CD4-positive, alpha-beta memory T cell (primary cell): ENCODE measurements at regions of chr17 and their contacts with region 1.

Region 1: DNA sequence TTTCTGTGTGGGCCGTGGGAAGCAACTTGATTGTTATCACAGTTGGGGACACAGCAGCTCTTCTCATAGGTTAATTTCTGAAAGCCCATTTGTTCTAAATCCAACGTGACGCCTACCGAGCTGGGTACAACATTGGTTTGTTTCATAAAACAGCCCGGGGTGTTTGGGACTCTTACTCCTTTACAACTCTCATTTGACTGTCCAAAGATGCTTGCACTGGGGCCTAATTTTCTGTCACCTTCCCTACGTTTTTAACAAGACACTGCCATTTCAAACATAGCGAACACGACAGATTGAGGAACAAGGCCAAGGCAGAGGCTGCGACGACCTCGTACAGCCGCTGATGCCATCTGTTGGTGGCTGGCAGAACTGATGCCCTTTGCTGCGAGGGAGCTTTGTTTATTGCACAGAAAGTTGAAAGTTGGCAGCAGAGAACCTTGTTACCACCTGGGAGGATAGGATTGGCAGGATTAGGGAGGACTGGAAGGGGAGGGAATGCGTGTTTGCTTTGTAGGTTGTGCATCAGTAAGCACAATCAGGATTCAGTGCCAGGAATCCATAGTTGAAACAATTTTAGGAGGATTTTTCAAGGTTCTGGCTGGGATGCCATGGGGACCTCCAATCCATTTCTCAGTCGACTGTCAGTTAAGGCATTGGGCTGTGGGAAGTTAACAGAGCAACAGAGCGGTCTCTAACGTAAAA is 98.3 kb downstream of the PITPNC1 start:
- DNase-seq: peak; percentile 84 to 87 (median 86)
- H3K4me3 ChIP-seq: peak overlapping the region in 1 of 2 donors; percentile 36
- H3K4me3 Mint-ChIP-seq: peak overlapping the region; percentile 76 to 86 (median 82)
- H3K27ac ChIP-seq: peak overlapping the region; percentile 64
- H3K27ac Mint-ChIP-seq: peak overlapping the region; percentile 94 to 97 (median 96)
- H3K4me1 ChIP-seq: peaks cover 61% of the 10 kb centered on the region
- H3K4me1 Mint-ChIP-seq: peaks cover 53 to 76% (median 63%) of the 10 kb centered on the region in 4 donors
- H3K27me3 ChIP-seq: no peaks in the 10 kb centered on the region
- H3K27me3 Mint-ChIP-seq: no peaks in the 10 kb centered on the region

Region 2: GRCh38 chr17:67390646-67391384 is 84.6 kb before region 1 on chr17:
- CTCF ChIA-PET with region 1: interaction called, 605 read pairs
- POLR2A ChIA-PET with region 1: interaction called, 43 read pairs
- intact Hi-C with region 1: loop called (anchors 1 kb)
- DNase-seq: peak; percentile 47 to 82 (median 61)
- H3K4me3 ChIP-seq: peak overlapping the region in 1 of 2 donors; percentile 6
- H3K4me3 Mint-ChIP-seq: peak overlapping the region; percentile 69 to 96 (median 85)
- H3K27ac ChIP-seq: peak overlapping the region; percentile 53
- H3K27ac Mint-ChIP-seq: peak overlapping the region; percentile 92 to 97 (median 96)
- H3K4me1 ChIP-seq: peaks cover 76% of the 10 kb centered on the region
- H3K4me1 Mint-ChIP-seq: peaks cover 46 to 82% (median 64%) of the 10 kb centered on the region in 4 donors
- H3K27me3 ChIP-seq: no peaks in the 10 kb centered on the region
- H3K27me3 Mint-ChIP-seq: no peaks in the 10 kb centered on the region

Region 3: DNA sequence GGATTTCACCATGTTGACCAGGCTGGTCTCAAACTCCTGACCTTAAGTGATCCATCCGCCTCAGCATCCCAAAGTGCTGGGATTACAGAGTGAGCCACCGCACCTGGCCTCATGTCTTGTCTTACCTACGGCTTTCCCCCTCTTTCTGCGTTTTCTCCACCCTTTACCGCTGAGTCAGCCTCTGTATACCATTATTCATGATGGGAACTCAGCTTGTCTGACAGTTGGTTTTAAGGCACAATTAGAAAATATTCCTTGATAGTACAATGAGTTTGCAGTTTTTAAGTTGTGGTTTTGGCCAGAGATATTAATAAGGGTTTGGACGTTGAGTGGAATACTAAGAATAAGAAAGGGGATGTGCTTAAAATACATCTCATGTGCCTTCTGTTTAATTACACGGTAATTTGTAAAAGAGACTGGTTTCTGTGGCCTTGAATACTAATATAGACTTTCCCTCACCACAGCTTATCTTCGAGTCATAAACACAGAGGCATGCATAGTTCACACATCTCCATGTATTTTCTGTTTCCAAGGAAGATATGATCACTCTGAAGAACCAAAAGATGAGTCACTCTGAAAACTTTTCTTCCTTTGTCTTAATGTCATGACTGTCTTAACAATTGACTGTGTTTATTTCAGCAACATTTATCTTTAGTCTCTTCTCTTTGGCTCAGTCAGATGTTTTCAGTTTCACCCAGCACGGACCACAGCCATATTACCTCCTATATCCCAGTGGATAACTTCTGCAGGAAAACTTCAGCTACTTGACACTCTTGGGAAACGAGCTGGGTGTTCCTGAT is 43.9 kb before region 1 on chr17:
- CTCF ChIA-PET with region 1: interaction called, 198 read pairs
- POLR2A ChIA-PET with region 1: interaction called, 39 read pairs
- intact Hi-C with region 1: loop called (anchors 1 kb)
- DNase-seq: peak in 1 of 5 donors; percentile 19
- H3K4me3 ChIP-seq: no peak overlapping the region
- H3K4me3 Mint-ChIP-seq: peak overlapping the region in 6 of 8 donors; percentile 7 to 58 (median 42)
- H3K27ac ChIP-seq: no peak overlapping the region
- H3K27ac Mint-ChIP-seq: peak overlapping the region; percentile 56 to 99 (median 77)
- H3K4me1 ChIP-seq: peaks cover 64% of the 10 kb centered on the region
- H3K4me1 Mint-ChIP-seq: peaks cover 43 to 82% (median 57%) of the 10 kb centered on the region in 4 donors
- H3K27me3 ChIP-seq: no peaks in the 10 kb centered on the region
- H3K27me3 Mint-ChIP-seq: no peaks in the 10 kb centered on the region

Region 4: DNA sequence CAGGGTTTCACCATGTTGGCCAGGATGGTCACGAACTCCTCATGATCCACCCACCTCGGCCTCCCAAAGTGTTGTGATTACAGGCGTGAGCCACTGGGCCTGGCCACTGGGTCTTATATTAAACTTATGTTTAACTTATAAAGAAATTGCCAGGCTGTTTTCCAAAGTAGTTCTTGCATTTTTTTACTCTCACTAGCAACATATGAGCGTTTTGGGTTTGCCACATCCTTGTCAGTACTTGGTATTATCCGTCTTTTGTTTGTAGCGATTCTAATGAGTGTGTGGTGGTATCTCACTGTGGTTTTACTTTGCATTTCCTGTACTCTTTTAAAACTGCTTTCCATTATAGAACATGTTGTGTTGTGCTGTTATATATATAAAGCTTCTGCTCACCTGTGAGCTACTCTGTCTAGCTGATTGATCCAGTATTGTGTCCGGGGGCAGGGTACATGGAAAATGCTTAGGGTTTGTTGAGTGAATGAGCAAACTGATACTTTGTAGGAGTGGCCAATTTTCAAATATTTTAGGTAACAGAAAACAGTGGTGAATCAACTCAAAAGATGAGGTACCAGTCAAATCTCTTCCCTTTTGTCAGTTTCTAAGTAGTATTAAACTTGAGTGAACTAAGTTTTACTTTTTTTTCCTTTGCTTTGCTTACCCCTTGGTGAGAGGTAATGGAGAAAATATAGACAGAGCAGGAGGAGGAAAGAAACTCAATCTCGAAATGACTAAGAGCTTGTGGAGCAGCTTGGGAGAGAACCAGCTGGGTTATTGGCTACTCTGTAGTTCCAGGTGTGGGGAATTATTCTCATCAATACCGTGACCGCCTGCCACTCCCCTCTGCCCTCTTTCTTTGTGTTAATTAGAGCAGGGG is 22.5 kb before region 1 on chr17:
- CTCF ChIA-PET with region 1: interaction called, 80 read pairs
- POLR2A ChIA-PET with region 1: interaction called, 104 read pairs
- intact Hi-C with region 1: loop called (anchors 2 kb)
- DNase-seq: peak; percentile 63 to 82 (median 75)
- H3K4me3 ChIP-seq: peak overlapping the region in 1 of 2 donors; percentile 17
- H3K4me3 Mint-ChIP-seq: peak overlapping the region; percentile 71 to 86 (median 80)
- H3K27ac ChIP-seq: peak overlapping the region; percentile 34
- H3K27ac Mint-ChIP-seq: peak overlapping the region; percentile 89 to 96 (median 96)
- H3K4me1 ChIP-seq: peaks cover 86% of the 10 kb centered on the region
- H3K4me1 Mint-ChIP-seq: peaks cover 56 to 100% (median 79%) of the 10 kb centered on the region in 4 donors
- H3K27me3 ChIP-seq: no peaks in the 10 kb centered on the region
- H3K27me3 Mint-ChIP-seq: no peaks in the 10 kb centered on the region

Region 5: DNA sequence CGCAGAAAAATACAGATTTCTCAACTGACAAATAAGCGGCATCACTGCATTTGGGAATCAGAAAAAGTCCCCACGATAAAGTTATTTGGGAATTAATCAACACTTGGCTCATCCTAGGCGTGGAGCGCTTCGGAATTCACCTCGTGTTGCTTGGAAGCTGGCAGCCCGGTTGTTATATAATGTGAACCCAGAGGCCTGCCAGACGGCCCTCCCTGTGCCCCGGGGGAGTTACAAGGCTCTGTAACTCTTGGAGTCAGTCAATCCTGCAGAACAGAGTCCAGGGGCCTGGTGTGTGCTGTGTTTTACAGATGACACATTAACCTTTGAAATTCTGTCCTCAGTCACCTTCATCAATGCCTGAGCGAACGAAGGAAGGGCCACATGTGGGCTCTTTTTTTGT is 12.8 kb after region 1 on chr17:
- CTCF ChIA-PET with region 1: interaction called, 10 read pairs
- POLR2A ChIA-PET with region 1: interaction called, 7 read pairs
- intact Hi-C with region 1: no loop called
- DNase-seq: no peak
- H3K4me3 ChIP-seq: no peak overlapping the region
- H3K4me3 Mint-ChIP-seq: no peak overlapping the region
- H3K27ac ChIP-seq: no peak overlapping the region
- H3K27ac Mint-ChIP-seq: peak overlapping the region in 2 of 7 donors; percentile 25 to 46
- H3K4me1 ChIP-seq: peaks cover 43% of the 10 kb centered on the region
- H3K4me1 Mint-ChIP-seq: peaks cover 40 to 79% (median 64%) of the 10 kb centered on the region in 4 donors
- H3K27me3 ChIP-seq: no peaks in the 10 kb centered on the region
- H3K27me3 Mint-ChIP-seq: no peaks in the 10 kb centered on the region

Region 6: GRCh38 chr17:67520252-67520906 is 45.0 kb after region 1 on chr17:
- CTCF ChIA-PET with region 1: no interaction called
- POLR2A ChIA-PET with region 1: no interaction called
- intact Hi-C with region 1: no loop called
- DNase-seq: no peak
- H3K4me3 ChIP-seq: no peak overlapping the region
- H3K4me3 Mint-ChIP-seq: peak overlapping the region in 7 of 8 donors; percentile 10 to 76 (median 57)
- H3K27ac ChIP-seq: no peak overlapping the region
- H3K27ac Mint-ChIP-seq: peak overlapping the region; percentile 52 to 91 (median 86)
- H3K4me1 ChIP-seq: peaks cover 16% of the 10 kb centered on the region
- H3K4me1 Mint-ChIP-seq: peaks cover 44 to 70% (median 54%) of the 10 kb centered on the region in 4 donors
- H3K27me3 ChIP-seq: no peaks in the 10 kb centered on the region
- H3K27me3 Mint-ChIP-seq: no peaks in the 10 kb centered on the region

Region 7: DNA sequence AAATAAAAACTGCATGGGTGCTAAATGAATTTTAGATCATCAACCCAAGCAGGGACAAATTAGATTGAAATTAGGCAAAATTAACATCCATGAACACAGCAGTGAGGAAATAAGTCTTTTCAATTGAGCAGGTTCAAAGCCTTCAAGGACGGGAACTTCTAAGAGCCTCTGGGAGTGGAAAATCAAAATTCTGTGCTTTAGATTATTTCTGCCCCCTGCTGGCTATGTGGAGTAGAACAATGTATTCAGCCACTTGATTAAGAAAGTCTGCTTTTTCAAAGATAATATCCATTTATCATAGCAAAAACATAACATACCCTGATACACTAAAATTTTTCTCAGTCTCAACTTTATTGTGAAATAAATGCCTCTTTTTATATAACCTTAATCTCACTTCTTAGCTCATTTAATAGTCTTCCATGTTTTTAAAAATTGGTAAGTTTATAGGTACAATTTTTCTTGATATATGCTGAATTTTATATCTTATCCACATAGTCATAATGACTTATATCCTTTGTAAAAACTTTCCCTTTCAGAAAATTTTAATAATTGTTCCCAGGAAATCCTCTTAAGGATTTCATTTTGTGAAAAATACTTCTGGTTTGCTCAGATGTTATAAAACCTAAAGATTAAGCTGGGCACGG is 214.3 kb after region 1 on chr17:
- CTCF ChIA-PET with region 1: interaction called, 3 read pairs
- POLR2A ChIA-PET with region 1: interaction called, 3 read pairs
- intact Hi-C with region 1: loop called (anchors 2 kb)
- DNase-seq: peak; percentile 57 to 63 (median 62)
- H3K4me3 ChIP-seq: no peak overlapping the region
- H3K4me3 Mint-ChIP-seq: no peak overlapping the region
- H3K27ac ChIP-seq: no peak overlapping the region
- H3K27ac Mint-ChIP-seq: peak overlapping the region in 2 of 7 donors; percentile 47 to 54
- H3K4me1 ChIP-seq: no peaks in the 10 kb centered on the region
- H3K4me1 Mint-ChIP-seq: peaks cover 0 to 4% (median 3%) of the 10 kb centered on the region in 4 donors
- H3K27me3 ChIP-seq: no peaks in the 10 kb centered on the region
- H3K27me3 Mint-ChIP-seq: no peaks in the 10 kb centered on the region

Region 8: DNA sequence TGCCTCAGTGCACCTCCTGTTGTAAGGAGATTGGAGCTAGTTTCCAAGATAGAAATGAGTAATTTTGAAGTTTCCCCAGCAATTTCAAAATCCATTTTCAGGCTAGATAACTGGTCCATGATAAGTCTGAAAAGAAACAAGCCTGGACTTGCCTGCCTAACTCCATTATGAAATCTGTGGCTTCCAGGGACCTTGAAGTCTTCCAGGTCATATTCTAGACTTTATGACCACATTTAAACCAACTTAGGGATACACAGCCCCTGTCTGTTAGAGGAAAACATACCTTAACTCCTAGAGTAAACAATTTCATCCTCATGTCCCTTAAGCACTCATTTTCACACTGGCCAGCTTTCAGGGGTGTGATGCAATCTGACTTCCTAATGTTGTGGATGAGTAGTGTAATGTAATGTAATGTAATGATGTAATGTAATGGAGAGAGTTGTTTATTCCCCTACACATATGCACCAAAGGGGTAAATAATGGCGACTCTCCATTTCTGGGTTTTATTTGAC is 1222.5 kb after region 1 on chr17:
- CTCF ChIA-PET with region 1: no interaction called
- POLR2A ChIA-PET with region 1: no interaction called
- intact Hi-C with region 1: no loop called
- DNase-seq: no peak
- H3K4me3 ChIP-seq: no peak overlapping the region
- H3K4me3 Mint-ChIP-seq: no peak overlapping the region
- H3K27ac ChIP-seq: no peak overlapping the region
- H3K27ac Mint-ChIP-seq: no peak overlapping the region
- H3K4me1 ChIP-seq: no peaks in the 10 kb centered on the region
- H3K4me1 Mint-ChIP-seq: peaks cover 0 to 1% (median 0%) of the 10 kb centered on the region in 4 donors
- H3K27me3 ChIP-seq: no peaks in the 10 kb centered on the region
- H3K27me3 Mint-ChIP-seq: peaks cover 1 to 21% of the 10 kb centered on the region in 2 donors